HAP-1 (cell line): ENCODE measurements at regions of chr2 and their contacts with region 1.

Region 1: GRCh38 chr2:130355578-130356431 is at the start of gene PTPN18:
- DNase-seq: peak; percentile 55 to 85
- H3K4me3 ChIP-seq: peak within 1 kb of the TSS; percentile 67
- H3K4me1 ChIP-seq: peaks cover 5% of the 10 kb centered on the region; the same call in 1 of the 2 replicates
- H3K27me3 ChIP-seq: no peaks in the 10 kb centered on the region

Region 2: DNA sequence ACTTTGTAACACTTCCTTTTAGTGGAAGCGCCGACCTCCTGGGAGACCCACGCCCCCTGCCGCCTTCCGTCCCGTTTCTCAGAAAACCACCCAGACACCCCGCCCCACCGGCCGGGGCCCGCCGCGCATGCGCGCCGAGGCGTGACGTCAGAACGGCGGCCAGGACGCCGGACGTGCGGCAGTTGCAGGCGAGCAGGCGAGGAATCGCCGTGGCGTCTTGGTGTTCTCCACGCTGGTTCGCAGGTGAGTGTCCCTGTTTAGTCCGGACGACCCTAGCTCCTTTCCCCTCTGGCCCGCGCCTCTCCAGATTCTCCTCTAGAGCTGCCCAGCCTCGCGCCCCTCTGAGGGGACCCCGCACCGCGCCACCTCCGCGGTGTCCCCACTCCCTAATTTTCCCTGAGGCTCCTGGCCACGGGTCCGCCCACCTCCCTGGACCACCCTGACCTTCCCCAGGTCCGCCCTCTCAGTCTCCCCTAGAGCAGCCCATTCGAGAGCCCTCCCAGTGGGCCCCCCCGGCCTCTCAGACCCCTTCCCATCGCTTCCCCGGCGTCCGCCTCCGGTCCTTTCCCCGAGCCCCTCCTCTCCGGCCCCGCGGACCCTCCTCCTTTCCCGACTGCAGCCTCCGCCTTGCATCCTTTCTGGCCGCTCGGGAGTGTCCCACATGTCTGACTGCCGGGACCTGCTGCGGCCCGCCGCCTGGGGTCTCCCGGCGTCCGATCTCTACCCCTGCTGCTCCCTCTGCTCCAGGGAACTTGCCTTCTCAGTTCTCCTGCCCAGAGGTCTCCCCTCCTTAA is 749.5 kb after region 1 on chr2 and contains the start of gene PLEKHB2:
- in situ Hi-C with region 1: loop called (anchors 25 kb)
- DNase-seq: peak; percentile 77 to 93
- H3K4me3 ChIP-seq: peak within 1 kb of the TSS; percentile 95
- H3K4me1 ChIP-seq: peaks cover 24% of the 10 kb centered on the region
- H3K27me3 ChIP-seq: no peaks in the 10 kb centered on the region

Region 3: GRCh38 chr2:131492418-131493198 is 1136.8 kb after region 1 on chr2:
- in situ Hi-C with region 1: loop called (anchors 25 kb)
- DNase-seq: peak; percentile 92 to 96
- H3K4me3 ChIP-seq: peak overlapping the region; percentile 48
- H3K4me1 ChIP-seq: no peaks in the 10 kb centered on the region
- H3K27me3 ChIP-seq: no peaks in the 10 kb centered on the region